ENCODE measurements at regions of chr14 and their contacts with region 1.

Region 1: GRCh38 chr14:68788996-68789820 is 3.7 kb downstream of the ZFP36L1 start:
- DNase-seq: peak; percentile 80 to 95 (median 87)
- ATAC-seq: peak; percentile 37 to 50
- H3K4me3 Mint-ChIP-seq: peak overlapping the region; percentile 86 to 100 (median 92)
- H3K27ac Mint-ChIP-seq: peak overlapping the region; percentile 91 to 100 (median 98)
- H3K4me1 Mint-ChIP-seq: peaks cover 35 to 67% (median 57%) of the 10 kb centered on the region in 4 donors
- H3K27me3 Mint-ChIP-seq: peaks cover 0 to 2% (median 0%) of the 10 kb centered on the region in 5 donors

Region 2: DNA sequence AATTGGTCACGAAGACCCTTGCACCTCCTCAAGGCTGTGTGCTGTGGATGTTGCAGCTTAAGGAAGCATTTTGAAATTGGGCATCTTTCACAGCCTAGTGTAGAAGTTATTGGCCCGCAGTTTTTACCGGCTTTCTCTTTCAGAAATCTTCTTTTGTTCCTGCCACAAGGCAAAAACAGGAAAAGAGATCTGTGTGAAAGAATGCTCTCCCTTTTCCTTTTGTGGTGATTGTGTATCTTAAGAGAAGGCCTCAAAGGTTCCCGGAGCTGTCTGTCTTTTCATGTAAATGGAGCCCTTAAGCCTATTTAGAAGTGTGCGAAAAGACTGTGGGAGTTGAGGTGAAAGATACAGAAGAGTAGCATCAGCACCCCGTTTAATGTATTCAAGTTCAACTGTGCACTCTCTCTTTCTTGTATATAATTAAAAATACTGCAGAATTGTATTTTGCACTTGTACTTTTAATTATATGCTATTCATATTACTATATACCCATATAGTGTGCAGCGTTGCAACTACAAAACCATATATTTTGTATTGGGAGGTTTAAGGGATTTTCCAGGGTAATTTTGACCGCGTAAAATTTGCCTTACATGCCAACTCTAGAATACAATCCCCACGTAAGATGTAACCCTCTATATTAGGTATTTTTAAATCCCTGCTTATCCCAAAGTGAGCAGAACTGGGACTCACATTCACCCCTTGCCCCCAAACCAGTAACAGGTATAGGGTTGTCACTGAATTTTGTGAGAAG is 527.9 kb before region 1 on chr14:
- POLR2A ChIA-PET with region 1: interaction called, 150 read pairs
- DNase-seq: peak in 2 of 10 donors; percentile 21 to 25
- ATAC-seq: peak; percentile 52 to 79
- H3K4me3 Mint-ChIP-seq: peak overlapping the region; percentile 22 to 81 (median 65)
- H3K27ac Mint-ChIP-seq: peak overlapping the region; percentile 62 to 95 (median 92)
- H3K4me1 Mint-ChIP-seq: peaks cover 39 to 73% (median 62%) of the 10 kb centered on the region in 4 donors
- H3K27me3 Mint-ChIP-seq: no peaks in the 10 kb centered on the region

Region 3: GRCh38 chr14:68685419-68686204 is 103.6 kb before region 1 on chr14:
- POLR2A ChIA-PET with region 1: interaction called, 94 read pairs
- DNase-seq: peak; percentile 39 to 93 (median 80)
- ATAC-seq: peak; percentile 86 to 88
- H3K4me3 Mint-ChIP-seq: peak overlapping the region in 9 of 10 donors; percentile 32 to 77 (median 72)
- H3K27ac Mint-ChIP-seq: peak overlapping the region; percentile 93 to 98 (median 96)
- H3K4me1 Mint-ChIP-seq: peaks cover 36 to 82% (median 70%) of the 10 kb centered on the region in 4 donors
- H3K27me3 Mint-ChIP-seq: no peaks in the 10 kb centered on the region

Region 4: DNA sequence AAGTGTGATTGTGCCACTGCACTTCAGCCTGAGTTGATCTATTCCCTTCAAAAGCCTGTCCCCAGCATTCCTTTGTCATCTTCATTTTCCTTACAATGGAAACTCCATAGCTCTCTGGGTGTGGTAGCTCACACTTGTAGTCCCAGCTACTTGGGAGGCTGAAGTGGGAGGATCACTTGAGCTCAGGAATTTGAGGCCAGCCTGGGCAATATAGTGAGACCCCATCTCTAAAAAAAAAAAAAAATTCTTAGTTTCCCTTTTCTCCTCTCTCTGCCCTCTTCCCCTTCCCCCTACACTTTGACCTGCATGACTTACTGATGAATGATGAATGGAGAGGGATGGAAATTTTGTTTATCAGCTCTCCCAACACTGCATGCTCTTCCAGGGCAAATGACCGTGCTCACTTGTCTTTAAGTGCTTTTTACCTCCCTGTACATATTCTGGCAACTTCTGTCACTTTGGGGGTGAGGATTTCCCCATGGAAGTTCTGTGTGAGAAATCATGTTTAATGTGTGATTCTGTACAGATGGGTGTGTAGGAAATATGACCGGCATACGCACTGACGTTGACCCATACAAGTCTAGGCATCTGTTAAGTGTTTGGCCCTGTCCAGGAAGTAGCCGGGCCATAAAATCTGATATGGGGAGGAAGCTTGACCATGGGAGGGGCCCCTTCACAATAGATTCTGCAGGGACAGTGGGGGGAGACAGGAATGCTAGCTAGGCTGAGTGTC is 61.7 kb before region 1 on chr14:
- POLR2A ChIA-PET with region 1: no interaction called
- DNase-seq: no peak
- ATAC-seq: no peak
- H3K4me3 Mint-ChIP-seq: no peak overlapping the region
- H3K27ac Mint-ChIP-seq: peak overlapping the region in 1 of 10 donors; percentile 15
- H3K4me1 Mint-ChIP-seq: peaks cover 0 to 48% (median 5%) of the 10 kb centered on the region in 4 donors
- H3K27me3 Mint-ChIP-seq: no peaks in the 10 kb centered on the region

Region 5: DNA sequence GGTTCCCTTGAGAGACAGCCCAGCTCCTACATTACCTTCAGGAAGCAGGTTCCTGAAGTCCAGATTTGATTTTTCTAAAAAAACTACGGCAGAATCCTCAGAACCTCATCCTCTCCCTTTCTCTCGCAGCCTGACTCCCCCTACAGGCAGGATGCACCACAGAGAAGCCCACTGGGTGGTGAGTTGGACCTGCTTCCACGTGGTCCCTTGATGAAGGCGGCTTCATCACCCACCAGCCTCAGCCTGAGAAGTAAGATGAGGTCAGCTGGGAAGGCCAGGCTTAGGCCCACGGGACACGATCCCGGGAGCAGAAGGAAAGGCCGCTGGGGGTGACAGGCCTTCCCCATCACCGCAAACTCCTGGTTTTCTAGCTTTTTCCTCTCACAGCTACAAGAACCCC is 106.9 kb after region 1 on chr14:
- POLR2A ChIA-PET with region 1: no interaction called
- DNase-seq: peak in 1 of 10 donors; percentile 27
- ATAC-seq: no peak
- H3K4me3 Mint-ChIP-seq: no peak overlapping the region
- H3K27ac Mint-ChIP-seq: peak overlapping the region in 7 of 10 donors; percentile 3 to 70 (median 22)
- H3K4me1 Mint-ChIP-seq: peaks cover 20 to 40% (median 24%) of the 10 kb centered on the region in 4 donors
- H3K27me3 Mint-ChIP-seq: no peaks in the 10 kb centered on the region